ENCODE measurements at regions of chr20 and their contacts with region 1.

Region 1: GRCh38 chr20:32437391-32438074 is 79.4 kb downstream of the ASXL1 start:
- DNase-seq: peak; percentile 77
- ATAC-seq: peak; percentile 60
- H3K4me3 ChIP-seq: no peak overlapping the region
- H3K27ac ChIP-seq: no peak overlapping the region
- H3K4me1 ChIP-seq: peaks cover 44% of the 10 kb centered on the region
- H3K27me3 ChIP-seq: no peaks in the 10 kb centered on the region
- CTCF ChIP-seq: peak; percentile 84
- EP300 ChIP-seq: peak in 1 of 2 experiments; percentile 21; a peak in 1 of 4 replicates
- POLR2A ChIP-seq: peak in 1 of 2 experiments; percentile 38; a peak in 2 of 4 replicates
- RAD21 ChIP-seq: peak; percentile 87

Region 2: DNA sequence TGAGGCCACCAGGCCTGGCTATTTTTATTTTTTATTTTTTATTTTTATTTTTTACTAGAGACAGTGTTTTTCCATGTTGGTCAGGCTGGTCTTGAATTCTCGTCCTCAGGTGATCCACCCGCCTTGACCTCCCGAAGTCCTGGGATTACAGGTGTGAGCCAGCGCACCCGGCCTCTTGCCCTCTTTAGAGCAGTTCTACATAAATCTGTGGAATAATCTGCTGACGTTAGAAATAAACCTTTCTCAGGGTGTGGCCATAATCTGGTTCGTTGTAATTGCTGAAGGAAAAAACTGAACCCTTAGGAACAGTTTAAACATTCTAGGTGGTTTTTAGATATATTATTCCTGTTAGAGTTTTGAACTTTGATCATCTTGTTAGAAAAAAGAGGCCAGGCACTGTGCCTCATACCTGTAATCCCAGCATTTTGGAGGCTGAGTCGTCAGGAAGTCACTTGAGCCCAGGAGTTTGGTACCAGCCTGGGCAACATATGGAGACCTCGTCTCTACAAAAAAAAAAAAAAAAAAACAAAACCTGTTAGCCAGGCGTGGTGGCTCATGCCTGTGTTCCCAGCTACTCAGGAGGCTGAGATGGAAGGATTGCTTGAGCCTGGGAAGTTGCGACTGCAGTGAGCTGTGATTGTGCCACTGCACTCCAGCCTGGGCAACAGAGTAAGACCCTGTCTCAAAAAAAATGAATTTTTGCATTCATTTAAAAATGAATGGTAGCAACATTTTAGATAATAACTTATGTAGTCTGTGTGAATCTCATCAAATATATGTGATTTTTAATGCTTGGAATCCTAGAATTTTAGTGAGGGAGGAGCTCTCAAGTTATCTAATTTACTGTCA is 55.2 kb before region 1 on chr20:
- CTCF ChIA-PET with region 1: no interaction called
- POLR2A ChIA-PET with region 1: no interaction called
- in situ Hi-C with region 1: loop called (anchors 10 kb)
- intact Hi-C with region 1: no loop called
- DNase-seq: no peak
- ATAC-seq: no peak
- H3K4me3 ChIP-seq: no peak overlapping the region
- H3K27ac ChIP-seq: no peak overlapping the region
- H3K4me1 ChIP-seq: peaks cover 60% of the 10 kb centered on the region
- H3K27me3 ChIP-seq: no peaks in the 10 kb centered on the region
- CTCF ChIP-seq: no peak
- EP300 ChIP-seq: no peak
- POLR2A ChIP-seq: no peak
- RAD21 ChIP-seq: no peak

Region 3: GRCh38 chr20:32456869-32457478 is 19.4 kb after region 1 on chr20:
- CTCF ChIA-PET with region 1: no interaction called
- POLR2A ChIA-PET with region 1: no interaction called
- in situ Hi-C with region 1: no loop called
- intact Hi-C with region 1: no loop called
- DNase-seq: no peak
- ATAC-seq: no peak; the same call in 2 of the 3 replicates
- H3K4me3 ChIP-seq: no peak overlapping the region
- H3K27ac ChIP-seq: no peak overlapping the region
- H3K4me1 ChIP-seq: no peaks in the 10 kb centered on the region
- H3K27me3 ChIP-seq: no peaks in the 10 kb centered on the region
- CTCF ChIP-seq: peak; percentile 48
- EP300 ChIP-seq: no peak
- POLR2A ChIP-seq: no peak
- RAD21 ChIP-seq: no peak